ENCODE measurements at regions of chr6 and their contacts with region 1.

Region 1: GRCh38 chr6:45900808-45901752 is 114.6 kb downstream of the CLIC5 start:
- DNase-seq: peak; percentile 14
- H3K4me3 Mint-ChIP-seq: no peak overlapping the region
- H3K27ac Mint-ChIP-seq: no peak overlapping the region
- H3K4me1 Mint-ChIP-seq: no peaks in the 10 kb centered on the region
- H3K27me3 Mint-ChIP-seq: no peaks in the 10 kb centered on the region
- CTCF ChIP-seq: no peak

Region 2: GRCh38 chr6:45289751-45290514 is 611.1 kb before region 1 on chr6:
- CTCF ChIA-PET with region 1: no interaction called
- POLR2A ChIA-PET with region 1: no interaction called
- intact Hi-C with region 1: no loop called
- DNase-seq: no peak
- H3K4me3 Mint-ChIP-seq: no peak overlapping the region
- H3K27ac Mint-ChIP-seq: no peak overlapping the region
- H3K4me1 Mint-ChIP-seq: no peaks in the 10 kb centered on the region
- H3K27me3 Mint-ChIP-seq: no peaks in the 10 kb centered on the region
- CTCF ChIP-seq: no peak

Region 3: GRCh38 chr6:45763281-45763680 is 137.8 kb before region 1 on chr6:
- CTCF ChIA-PET with region 1: no interaction called
- POLR2A ChIA-PET with region 1: no interaction called
- intact Hi-C with region 1: loop called (anchors 10 kb)
- DNase-seq: no peak
- H3K4me3 Mint-ChIP-seq: no peak overlapping the region
- H3K27ac Mint-ChIP-seq: no peak overlapping the region
- H3K4me1 Mint-ChIP-seq: no peaks in the 10 kb centered on the region
- H3K27me3 Mint-ChIP-seq: no peaks in the 10 kb centered on the region
- CTCF ChIP-seq: no peak

Region 4: GRCh38 chr6:45880159-45880558 is 20.9 kb before region 1 on chr6:
- CTCF ChIA-PET with region 1: no interaction called
- POLR2A ChIA-PET with region 1: no interaction called
- intact Hi-C with region 1: no loop called
- DNase-seq: no peak
- H3K4me3 Mint-ChIP-seq: no peak overlapping the region
- H3K27ac Mint-ChIP-seq: no peak overlapping the region
- H3K4me1 Mint-ChIP-seq: no peaks in the 10 kb centered on the region
- H3K27me3 Mint-ChIP-seq: no peaks in the 10 kb centered on the region
- CTCF ChIP-seq: no peak

Measured in MCF 10A (cell line).